PC-9 (cell line): ENCODE measurements at regions of chr6 and their contacts with region 1.

Region 1: DNA sequence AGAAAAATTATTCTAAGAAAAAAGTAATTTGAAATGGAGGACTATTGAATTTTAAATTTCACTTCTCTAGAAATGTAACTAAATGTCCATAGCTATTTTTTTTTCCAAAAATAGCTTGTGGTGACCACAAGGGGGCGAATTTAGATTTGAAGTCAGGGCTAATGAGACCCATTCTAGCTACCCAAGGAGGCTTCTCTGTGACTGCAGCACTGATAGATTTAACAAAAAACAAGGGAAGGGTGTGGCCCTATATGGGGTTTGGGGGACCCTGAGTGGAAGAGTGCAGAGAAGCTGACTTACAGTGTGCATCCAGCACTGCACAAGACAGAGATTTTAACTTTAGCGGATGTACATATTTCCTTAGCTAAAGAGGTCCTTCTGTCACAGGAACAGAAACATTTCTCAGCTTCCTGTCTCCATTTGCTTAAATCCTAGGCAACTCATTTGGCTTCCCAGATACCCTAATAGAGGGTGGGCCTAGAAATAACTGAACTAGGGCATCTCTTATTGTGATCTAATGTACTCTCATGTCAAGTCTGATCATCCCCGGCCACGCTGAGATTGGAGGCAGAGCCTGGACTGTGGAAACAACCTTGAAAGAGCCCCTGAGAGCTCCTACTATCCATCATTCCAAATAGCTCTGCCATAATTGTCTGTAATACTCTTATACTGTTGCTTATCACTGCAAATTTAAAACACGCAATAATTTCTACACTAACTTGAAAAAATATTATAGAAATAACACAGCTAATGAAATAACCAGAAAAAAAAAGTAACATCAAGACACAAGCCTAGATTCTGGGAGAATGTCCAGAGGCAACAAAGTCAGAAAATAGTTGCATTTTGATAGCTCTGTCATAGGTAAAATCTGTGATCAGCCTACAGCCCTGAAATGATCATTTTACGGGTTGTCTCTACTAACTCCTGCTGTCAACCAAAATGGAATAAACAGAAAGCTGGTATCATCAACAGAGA is 93.6 kb downstream of the SNAP91 start:
- DNase-seq: no peak
- H3K4me3 ChIP-seq: no peak overlapping the region
- H3K27ac ChIP-seq: no peak overlapping the region
- H3K4me1 ChIP-seq: no peaks in the 10 kb centered on the region
- H3K27me3 ChIP-seq: no peaks in the 10 kb centered on the region
- CTCF ChIP-seq: peak; percentile 75

Region 2: DNA sequence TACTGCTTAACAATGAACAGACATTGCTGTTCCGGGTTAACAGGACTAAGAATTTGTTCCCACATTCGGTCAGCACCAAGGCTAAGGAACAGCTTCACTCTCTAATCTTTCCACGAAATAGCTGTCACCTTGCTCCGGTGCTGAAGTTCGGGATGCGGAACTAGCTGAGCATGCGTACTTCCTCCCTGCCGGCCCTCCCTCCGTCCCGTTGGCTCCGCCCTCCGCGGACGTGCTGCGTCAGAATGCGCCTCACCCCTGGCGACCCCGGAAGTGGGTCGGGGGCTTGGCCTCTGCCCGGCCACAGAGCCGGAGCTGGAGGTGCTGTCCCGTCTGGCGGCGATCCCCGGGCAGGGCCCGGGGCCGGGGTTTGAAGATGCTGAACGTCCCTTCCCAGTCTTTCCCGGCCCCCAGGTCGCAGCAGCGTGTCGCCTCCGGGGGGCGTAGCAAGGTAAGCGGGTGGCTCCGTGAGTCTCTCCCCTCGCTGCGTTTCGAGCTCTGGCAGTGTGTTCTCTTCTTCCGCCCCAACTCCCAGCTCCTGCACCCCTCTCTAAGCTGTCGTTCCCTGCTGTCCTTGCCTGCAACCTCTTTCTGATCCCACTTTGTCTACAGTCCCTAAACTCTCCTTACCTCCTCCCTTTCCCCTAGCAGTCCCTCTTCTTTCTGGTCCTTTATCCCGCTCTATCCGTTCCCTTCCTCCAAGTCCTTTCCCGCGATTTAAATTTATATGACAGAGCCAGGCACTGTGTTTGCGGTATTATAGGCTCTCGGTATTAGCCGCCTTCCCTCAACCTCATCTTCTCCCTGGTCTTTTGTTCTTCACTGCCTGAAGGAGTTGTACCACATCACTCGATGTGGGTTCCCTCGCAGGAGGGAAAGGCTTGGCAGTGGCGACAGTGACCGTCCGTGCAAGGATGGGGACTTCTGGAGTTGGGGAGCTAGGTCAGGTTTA is 244.4 kb after region 1 on chr6 and contains the start of gene CYB5R4:
- CTCF ChIA-PET with region 1: no interaction called
- POLR2A ChIA-PET with region 1: interaction called, 5 read pairs
- intact Hi-C with region 1: loop called (anchors 10 kb)
- DNase-seq: peak; percentile 83 to 95
- H3K4me3 ChIP-seq: peak within 1 kb of the TSS; percentile 87
- H3K27ac ChIP-seq: peak within 1 kb of the TSS; percentile 18; the same call in 1 of the 2 replicates
- H3K4me1 ChIP-seq: peaks cover 17% of the 10 kb centered on the region
- H3K27me3 ChIP-seq: no peaks in the 10 kb centered on the region
- CTCF ChIP-seq: peak; percentile 53; the same call in 1 of the 2 replicates
- total RNA-seq, gene CYB5R4: 15.3 and 22.7 TPM in 2 replicates